SK-N-SH (cell line): ENCODE measurements at regions of chr3 and their contacts with region 1.

Region 1: GRCh38 chr3:123028233-123028828 is 768 bp upstream of the SEMA5B start:
- DNase-seq: peak; percentile 79
- H3K4me3 ChIP-seq: peak overlapping the region; percentile 50 to 63
- H3K27ac ChIP-seq: no peak overlapping the region
- H3K4me1 ChIP-seq: peaks cover 0 to 23% of the 10 kb centered on the region in 2 experiments; a peak in 2 of 4 replicates
- H3K27me3 ChIP-seq: peaks cover 45% of the 10 kb centered on the region
- CTCF ChIP-seq: peak; percentile 76
- EP300 ChIP-seq: no peak
- RAD21 ChIP-seq: peak; percentile 92

Region 2: DNA sequence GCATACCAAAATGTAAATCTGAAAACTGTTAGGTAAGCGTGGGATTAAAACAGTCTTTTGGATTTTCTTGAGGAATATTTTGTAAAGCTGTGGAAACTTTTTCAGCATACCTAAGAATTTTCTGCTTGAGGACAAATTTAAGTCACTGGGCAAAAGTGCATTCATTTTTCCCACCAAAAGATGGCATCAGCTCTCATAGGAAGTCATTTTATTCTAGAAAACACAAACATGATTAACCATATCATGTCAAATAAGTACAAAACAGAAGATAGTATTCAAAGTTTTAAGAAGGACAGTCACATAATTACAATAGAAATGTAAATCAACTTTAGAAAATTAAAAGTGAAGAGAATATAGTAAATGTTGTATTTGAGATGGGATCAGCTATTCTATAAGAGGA is 170.0 kb before region 1 on chr3:
- CTCF ChIA-PET with region 1: interaction called, 18 read pairs
- POLR2A ChIA-PET with region 1: no interaction called
- DNase-seq: peak; percentile 17
- H3K4me3 ChIP-seq: no peak overlapping the region
- H3K27ac ChIP-seq: no peak overlapping the region
- H3K4me1 ChIP-seq: no peaks in the 10 kb centered on the region
- H3K27me3 ChIP-seq: no peaks in the 10 kb centered on the region
- CTCF ChIP-seq: peak; percentile 60
- EP300 ChIP-seq: no peak
- RAD21 ChIP-seq: peak; percentile 68

Region 3: GRCh38 chr3:122957707-122958689 is 70.3 kb before region 1 on chr3:
- CTCF ChIA-PET with region 1: interaction called, 11 read pairs
- POLR2A ChIA-PET with region 1: no interaction called
- DNase-seq: no peak
- H3K4me3 ChIP-seq: no peak overlapping the region
- H3K27ac ChIP-seq: no peak overlapping the region
- H3K4me1 ChIP-seq: peaks cover 0 to 13% of the 10 kb centered on the region in 2 experiments; a peak in 1 of 4 replicates
- H3K27me3 ChIP-seq: no peaks in the 10 kb centered on the region
- CTCF ChIP-seq: no peak
- EP300 ChIP-seq: no peak
- RAD21 ChIP-seq: no peak

Region 4: DNA sequence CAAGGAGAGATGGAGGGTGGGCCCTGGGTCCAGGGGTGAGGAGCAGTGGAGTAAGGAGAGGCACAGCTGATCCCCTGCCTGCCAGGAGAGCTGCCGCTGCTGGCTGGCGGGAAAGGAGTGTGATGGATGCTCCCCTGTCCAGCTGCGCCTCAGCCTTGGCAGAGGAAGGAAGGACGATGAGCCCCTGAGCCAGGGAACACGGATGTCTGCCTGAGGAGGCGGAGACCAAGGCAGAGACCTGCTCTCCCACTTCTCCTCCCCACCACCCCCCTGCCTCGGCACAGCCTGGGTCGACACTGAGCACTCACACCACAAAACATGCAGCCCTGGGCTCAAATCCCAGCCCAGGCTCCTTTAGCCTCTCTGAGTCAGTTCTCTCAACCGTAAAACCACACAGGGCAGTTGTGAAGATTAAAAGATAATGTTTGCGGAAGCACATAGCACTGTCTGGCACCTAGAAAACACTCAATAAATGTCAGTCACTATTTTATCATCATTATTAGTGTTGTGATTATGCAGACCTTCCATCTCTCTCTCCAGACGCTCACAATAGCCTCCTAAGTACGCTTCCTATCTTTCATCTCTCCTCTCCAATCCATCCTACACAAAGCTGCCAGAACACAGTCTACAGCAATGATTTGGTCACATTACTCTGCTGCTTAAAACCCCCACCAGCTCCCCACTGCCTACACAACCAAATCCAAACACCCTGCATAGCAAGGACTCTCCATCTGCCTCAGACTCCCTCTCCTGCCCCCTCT is 53.0 kb before region 1 on chr3:
- CTCF ChIA-PET with region 1: interaction called, 29 read pairs
- POLR2A ChIA-PET with region 1: interaction called, 3 read pairs
- DNase-seq: peak; percentile 78
- H3K4me3 ChIP-seq: peak overlapping the region; percentile 30 to 51
- H3K27ac ChIP-seq: peak overlapping the region; percentile 90 to 97
- H3K4me1 ChIP-seq: peaks cover 46 to 58% of the 10 kb centered on the region in 2 experiments
- H3K27me3 ChIP-seq: no peaks in the 10 kb centered on the region
- CTCF ChIP-seq: no peak
- EP300 ChIP-seq: peak; percentile 90 to 99
- RAD21 ChIP-seq: peak; percentile 31

Region 5: DNA sequence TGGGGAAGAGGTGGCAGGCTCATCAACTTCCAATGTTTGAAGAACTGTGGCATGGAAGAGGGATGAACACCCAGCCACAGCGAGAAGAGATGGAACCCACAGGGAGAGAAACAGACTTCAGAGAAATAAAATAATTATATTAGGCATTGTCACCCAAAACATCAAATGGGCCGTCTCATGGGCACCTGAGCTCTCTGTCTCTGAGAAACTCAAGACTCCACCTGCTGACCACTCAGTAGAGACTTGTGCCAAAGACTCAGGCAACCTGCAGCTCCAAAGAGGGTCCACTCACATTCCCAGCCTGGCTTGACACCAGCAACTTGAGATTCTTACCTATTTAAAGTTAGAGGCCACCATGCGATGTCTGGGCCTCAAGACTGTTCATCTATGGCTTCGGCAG is 12.8 kb before region 1 on chr3:
- CTCF ChIA-PET with region 1: interaction called, 21 read pairs
- POLR2A ChIA-PET with region 1: interaction called, 4 read pairs
- DNase-seq: no peak
- H3K4me3 ChIP-seq: no peak overlapping the region
- H3K27ac ChIP-seq: no peak overlapping the region
- H3K4me1 ChIP-seq: no peaks in the 10 kb centered on the region; a peak in 1 of 4 replicates
- H3K27me3 ChIP-seq: peaks cover 23% of the 10 kb centered on the region; the same call in 1 of the 2 replicates
- CTCF ChIP-seq: no peak; the same call in 1 of the 2 replicates
- EP300 ChIP-seq: no peak
- RAD21 ChIP-seq: no peak

Region 6: DNA sequence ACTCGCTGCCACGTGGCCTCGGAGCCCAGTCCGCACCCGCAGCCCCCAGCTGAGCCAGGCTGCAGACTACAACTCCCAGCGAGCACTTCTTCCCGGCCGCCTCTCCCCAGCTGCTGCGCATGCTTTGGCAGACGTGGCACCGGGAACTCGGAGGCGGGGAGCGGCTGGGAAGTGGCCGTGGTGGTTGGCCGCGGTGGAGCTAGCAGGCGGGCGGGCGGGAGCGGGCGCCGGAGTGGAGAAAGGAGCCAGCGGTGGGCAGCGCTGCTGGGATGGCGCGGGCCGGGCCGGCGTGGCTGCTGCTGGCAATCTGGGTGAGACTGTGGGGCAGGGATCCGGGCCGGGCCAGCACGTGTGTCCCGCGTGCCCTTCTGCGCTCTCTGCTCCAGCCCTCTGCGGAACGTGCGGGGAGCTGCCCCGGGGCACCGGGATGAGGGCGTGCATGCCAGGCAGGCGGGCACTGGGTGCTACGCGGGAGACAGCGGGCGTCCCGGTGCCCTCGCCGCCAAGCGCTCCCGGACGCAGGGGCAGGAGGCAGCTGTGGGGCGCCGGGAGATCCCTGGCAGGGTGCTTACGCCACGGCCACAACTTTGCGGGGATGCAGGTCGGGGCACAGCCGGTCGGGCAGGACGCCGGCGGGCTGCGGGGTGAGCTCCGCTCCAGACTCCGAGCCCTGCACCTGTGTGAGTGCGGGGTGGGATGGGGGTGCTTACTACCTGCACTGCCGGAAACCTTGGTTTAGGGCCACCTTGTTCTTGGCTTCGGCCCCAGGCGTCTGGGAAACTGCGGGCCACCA is 38.8 kb after region 1 on chr3 and contains the start of gene PDIA5:
- CTCF ChIA-PET with region 1: interaction called, 13 read pairs
- POLR2A ChIA-PET with region 1: no interaction called
- DNase-seq: peak; percentile 96
- H3K4me3 ChIP-seq: peak within 1 kb of the TSS; percentile 94 to 96
- H3K27ac ChIP-seq: peak within 1 kb of the TSS; percentile 49 to 80; a peak in 3 of 4 replicates
- H3K4me1 ChIP-seq: peaks cover 3 to 33% of the 10 kb centered on the region in 2 experiments; a peak in 3 of 4 replicates
- H3K27me3 ChIP-seq: no peaks in the 10 kb centered on the region
- CTCF ChIP-seq: no peak
- EP300 ChIP-seq: no peak
- RAD21 ChIP-seq: no peak
- polyA plus RNA-seq, gene PDIA5: 28.0 and 28.6 TPM in 2 replicates